Posterior vena cava (tissue), 2 donors: ENCODE measurements at regions of chr9 and their contacts with region 1.

Region 1: DNA sequence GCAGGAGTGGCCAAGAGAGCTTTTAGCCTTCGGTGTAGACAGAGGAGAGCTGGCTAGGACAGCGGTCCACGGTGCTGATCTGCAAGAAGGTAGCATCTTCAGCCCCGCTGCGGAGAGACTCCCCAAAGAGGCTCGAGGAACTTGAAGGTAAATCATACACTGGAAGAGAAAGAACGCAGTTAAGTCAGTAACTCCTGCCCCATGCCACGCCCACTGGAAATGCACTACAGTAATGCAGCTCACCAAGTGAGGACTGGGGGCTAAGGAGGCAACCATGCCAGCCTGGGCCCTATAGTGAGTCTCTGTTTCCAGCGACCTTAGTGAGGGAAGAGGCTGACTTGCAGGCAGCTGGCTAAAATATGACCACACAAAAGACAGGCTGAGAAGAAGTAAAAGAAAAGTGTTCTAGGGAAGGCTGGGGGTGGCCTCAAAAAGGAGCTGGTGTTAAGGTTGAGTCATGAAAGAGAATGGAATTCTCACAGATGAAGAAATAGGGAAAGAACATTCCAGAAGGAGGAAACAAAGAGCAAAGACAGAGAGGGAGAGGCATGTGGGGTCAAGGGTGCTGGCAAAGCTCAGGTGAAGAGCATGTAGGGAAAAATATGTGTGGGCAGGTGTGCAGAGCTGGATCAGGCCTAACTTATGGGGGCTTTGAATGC is 302.6 kb upstream of the RFX3 start:
- DNase-seq: no peak

Region 2: DNA sequence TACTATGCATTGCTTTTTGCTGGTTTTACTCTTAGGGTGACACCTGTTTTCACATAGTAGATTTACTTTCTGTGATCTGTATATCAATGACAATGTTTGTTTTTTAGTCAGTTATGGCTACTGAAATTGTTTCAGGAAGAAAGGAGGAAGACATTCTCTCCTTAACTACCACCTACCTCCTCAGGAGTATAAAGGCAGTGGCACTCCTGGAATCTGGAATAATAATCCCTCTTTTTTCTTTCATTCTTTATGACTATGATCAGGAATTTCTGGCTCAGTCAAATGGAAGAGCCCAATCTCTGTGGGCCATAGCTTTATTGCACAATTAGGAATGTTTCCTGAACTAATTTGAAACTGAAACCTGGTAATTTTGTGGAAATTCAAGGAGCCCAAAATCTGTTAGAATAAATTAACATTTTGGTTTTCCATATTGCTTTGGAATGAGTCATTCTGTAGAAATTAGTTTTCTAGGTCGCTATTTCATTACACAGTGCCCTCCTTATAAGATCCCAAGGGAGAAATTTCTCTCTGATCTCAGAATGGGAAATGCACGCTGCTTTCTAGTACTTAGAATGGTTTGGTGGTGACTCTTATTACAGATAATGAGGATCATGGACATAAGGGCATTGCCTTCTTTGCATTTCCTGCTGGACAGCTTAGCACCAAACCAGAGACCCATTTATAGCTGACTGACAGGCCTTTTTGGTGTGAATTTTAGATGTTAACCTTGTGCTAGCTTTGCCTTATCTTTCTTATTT is 1302.1 kb before region 1 on chr9:
- intact Hi-C with region 1: loop called in 1 of 2 experiments (anchors 5 kb)
- DNase-seq: no peak

Region 3: DNA sequence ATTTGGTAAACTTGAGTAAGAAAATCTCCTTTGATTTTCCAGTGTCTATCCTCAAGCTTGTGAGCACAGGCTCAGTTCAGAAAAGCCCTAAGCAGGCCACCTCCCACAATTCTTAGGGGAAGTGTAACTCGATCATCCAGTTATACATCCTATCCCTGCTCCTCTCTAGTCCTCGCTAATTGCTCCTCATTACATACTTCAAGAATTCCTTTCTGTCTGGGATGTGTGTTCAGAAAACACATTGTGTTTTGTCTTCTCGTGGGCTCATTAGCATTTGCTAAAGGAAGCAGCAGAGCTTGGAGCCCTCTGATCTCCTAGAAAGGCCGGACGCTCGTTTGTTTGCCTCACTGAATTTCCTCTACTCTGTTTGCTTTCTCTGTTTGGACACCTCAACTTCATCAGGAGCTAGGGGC is 34.4 kb before region 1 on chr9:
- intact Hi-C with region 1: loop called in 1 of 2 experiments (anchors 1 kb)
- DNase-seq: no peak